Activated naive CD4-positive, alpha-beta T cell treated with anti-CD3 and anti-CD28 coated beads, Interleukin-2, amount 10 ng/mL, durations not matched to agents 7 days and 5 days (primary cell): ENCODE measurements at regions of chr12 and their contacts with region 1.

Region 1: GRCh38 chr12:110888256-110888991 is 32.0 kb downstream of the MYL2 start:
- DNase-seq: no peak
- H3K4me3 Mint-ChIP-seq: peak overlapping the region; percentile 89
- H3K27ac Mint-ChIP-seq: no peak overlapping the region
- H3K4me1 Mint-ChIP-seq: peaks cover 7% of the 10 kb centered on the region
- H3K27me3 Mint-ChIP-seq: peaks cover 43% of the 10 kb centered on the region

Region 2: GRCh38 chr12:110704748-110705147 is 183.7 kb before region 1 on chr12:
- CTCF ChIA-PET with region 1: interaction called, 14 read pairs
- DNase-seq: peak; percentile 52
- H3K4me3 Mint-ChIP-seq: no peak overlapping the region
- H3K27ac Mint-ChIP-seq: no peak overlapping the region
- H3K4me1 Mint-ChIP-seq: no peaks in the 10 kb centered on the region
- H3K27me3 Mint-ChIP-seq: no peaks in the 10 kb centered on the region